ENCODE measurements at regions of chr6 and their contacts with region 1.

Region 1: GRCh38 chr6:166999145-166999883 is at the start of gene CEP43:
- DNase-seq: peak; percentile 64 to 93 (median 81)
- ATAC-seq: peak; percentile 94
- H3K4me3 ChIP-seq: peak within 1 kb of the TSS; percentile 83
- H3K4me3 Mint-ChIP-seq: peak within 1 kb of the TSS; percentile 85 to 95 (median 88)
- H3K27ac ChIP-seq: peak within 1 kb of the TSS; percentile 78
- H3K27ac Mint-ChIP-seq: peak within 1 kb of the TSS; percentile 61 to 95 (median 81)
- H3K4me1 ChIP-seq: peaks cover 16% of the 10 kb centered on the region in 2 donors
- H3K4me1 Mint-ChIP-seq: peaks cover 28 to 38% (median 30%) of the 10 kb centered on the region in 7 donors
- H3K27me3 ChIP-seq: no peaks in the 10 kb centered on the region
- H3K27me3 Mint-ChIP-seq: no peaks in the 10 kb centered on the region
- total RNA-seq, gene CEP43: 11.5 to 17.6 (median 15.5) TPM

Region 2: DNA sequence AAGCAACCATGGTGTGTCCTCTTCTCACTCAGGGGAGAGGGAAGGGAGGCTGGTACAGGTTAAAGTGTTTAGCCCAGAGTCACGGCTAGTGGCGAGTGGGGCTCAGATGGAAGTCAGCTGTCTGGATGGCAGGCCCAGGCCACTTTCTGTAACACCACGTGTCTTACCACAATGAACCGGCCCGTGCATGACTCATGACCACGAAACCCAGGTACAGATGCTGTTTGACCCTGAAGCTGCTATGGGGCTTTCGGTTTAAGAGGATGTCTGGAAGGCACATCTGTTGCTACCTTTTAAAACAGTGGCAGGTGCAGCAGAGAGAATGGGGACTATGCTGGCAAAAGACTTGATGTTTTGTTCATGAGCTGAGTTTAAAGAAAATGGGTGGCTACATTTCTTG is 580.0 kb before region 1 on chr6:
- CTCF ChIA-PET with region 1: no interaction called
- POLR2A ChIA-PET with region 1: no interaction called
- intact Hi-C with region 1: loop called (anchors 2 to 10 kb)
- DNase-seq: peak in 2 of 9 donors; percentile 34 to 52
- ATAC-seq: peak; percentile 42
- H3K4me3 ChIP-seq: no peak overlapping the region
- H3K4me3 Mint-ChIP-seq: peak overlapping the region; percentile 4 to 79 (median 57)
- H3K27ac ChIP-seq: peak overlapping the region; percentile 50
- H3K27ac Mint-ChIP-seq: peak overlapping the region; percentile 83 to 99 (median 97)
- H3K4me1 ChIP-seq: peaks cover 63 to 66% of the 10 kb centered on the region in 2 donors
- H3K4me1 Mint-ChIP-seq: peaks cover 52 to 73% (median 64%) of the 10 kb centered on the region in 7 donors
- H3K27me3 ChIP-seq: no peaks in the 10 kb centered on the region
- H3K27me3 Mint-ChIP-seq: peaks cover 0 to 1% (median 0%) of the 10 kb centered on the region in 5 donors

Region 3: DNA sequence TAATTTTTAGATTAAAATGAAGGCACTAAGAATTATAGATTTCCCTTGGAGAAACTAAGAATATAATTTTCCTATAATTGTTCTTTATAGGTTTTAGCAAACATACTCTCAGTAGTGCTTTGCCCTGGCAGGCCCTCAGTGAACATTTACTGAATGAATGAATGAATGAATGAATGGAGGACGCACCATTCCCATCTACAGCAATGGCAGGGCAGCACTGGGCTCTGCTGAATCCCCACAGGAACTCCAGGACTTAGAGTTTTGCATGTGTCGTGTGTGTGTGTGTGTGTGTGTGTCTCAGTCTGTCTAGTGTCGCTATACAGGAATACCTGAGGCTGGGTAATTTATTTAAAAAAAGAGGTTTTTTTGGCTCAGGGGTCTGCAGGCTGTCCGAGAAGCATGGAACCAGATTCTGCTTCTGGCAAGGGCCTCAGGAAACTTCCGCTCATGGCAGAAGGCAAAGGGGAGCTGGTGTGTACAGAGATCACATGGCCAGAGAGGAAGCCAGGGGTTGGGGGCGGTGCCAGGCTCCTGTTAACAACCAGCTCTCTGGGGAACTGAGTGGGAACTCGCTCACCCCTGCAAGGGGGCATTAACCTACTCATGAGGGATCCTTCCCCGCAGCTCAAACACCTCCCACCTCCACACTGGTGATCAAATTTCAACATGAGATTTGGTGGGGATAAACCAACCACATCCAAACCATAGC is 63.1 kb before region 1 on chr6:
- CTCF ChIA-PET with region 1: no interaction called
- POLR2A ChIA-PET with region 1: no interaction called
- intact Hi-C with region 1: no loop called
- DNase-seq: peak in 4 of 9 donors; percentile 22 to 56 (median 27)
- ATAC-seq: peak; percentile 44
- H3K4me3 ChIP-seq: no peak overlapping the region
- H3K4me3 Mint-ChIP-seq: peak overlapping the region in 9 of 10 donors; percentile 6 to 74 (median 54)
- H3K27ac ChIP-seq: peak overlapping the region; percentile 54
- H3K27ac Mint-ChIP-seq: peak overlapping the region; percentile 41 to 97 (median 85)
- H3K4me1 ChIP-seq: peaks cover 0 to 16% of the 10 kb centered on the region in 2 donors
- H3K4me1 Mint-ChIP-seq: peaks cover 21 to 60% (median 32%) of the 10 kb centered on the region in 7 donors
- H3K27me3 ChIP-seq: no peaks in the 10 kb centered on the region
- H3K27me3 Mint-ChIP-seq: no peaks in the 10 kb centered on the region

Region 4: GRCh38 chr6:166950443-166950821 is 48.9 kb before region 1 on chr6:
- CTCF ChIA-PET with region 1: interaction called, 3 read pairs
- POLR2A ChIA-PET with region 1: interaction called, 3 read pairs
- intact Hi-C with region 1: loop called in 1 of 2 experiments (anchors 1 kb)
- DNase-seq: peak in 1 of 9 donors; percentile 31
- ATAC-seq: peak; percentile 12
- H3K4me3 ChIP-seq: peak overlapping the region; percentile 45
- H3K4me3 Mint-ChIP-seq: peak overlapping the region; percentile 51 to 95 (median 84)
- H3K27ac ChIP-seq: peak overlapping the region; percentile 92
- H3K27ac Mint-ChIP-seq: peak overlapping the region; percentile 91 to 99 (median 98)
- H3K4me1 ChIP-seq: peaks cover 28 to 63% of the 10 kb centered on the region in 2 donors
- H3K4me1 Mint-ChIP-seq: peaks cover 42 to 67% (median 64%) of the 10 kb centered on the region in 7 donors
- H3K27me3 ChIP-seq: no peaks in the 10 kb centered on the region
- H3K27me3 Mint-ChIP-seq: no peaks in the 10 kb centered on the region

Region 5: DNA sequence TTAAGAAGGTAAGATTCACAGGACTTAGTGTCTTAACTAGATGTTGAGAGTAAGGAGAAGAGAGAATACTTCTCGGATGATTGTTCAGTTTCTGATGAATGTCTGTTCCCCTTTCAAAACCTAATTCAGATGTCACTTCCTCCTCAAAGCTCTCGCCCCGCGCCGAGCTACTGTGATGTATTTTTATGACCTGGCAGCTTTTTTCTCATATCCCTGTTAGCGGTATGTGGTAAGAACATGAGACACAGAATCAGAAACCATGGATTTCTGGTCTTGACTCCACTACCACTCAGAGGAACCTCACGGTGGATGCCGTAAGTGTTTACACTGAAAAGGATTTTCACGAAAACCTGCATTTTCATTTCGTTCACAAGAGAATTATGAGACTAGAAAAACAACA is 48.2 kb after region 1 on chr6:
- CTCF ChIA-PET with region 1: interaction called, 3 read pairs
- POLR2A ChIA-PET with region 1: interaction called, 3 read pairs
- intact Hi-C with region 1: loop called in 1 of 2 experiments (anchors 2 kb)
- DNase-seq: peak in 6 of 9 donors; percentile 15 to 41 (median 28)
- ATAC-seq: peak; percentile 87
- H3K4me3 ChIP-seq: peak overlapping the region; percentile 5
- H3K4me3 Mint-ChIP-seq: peak overlapping the region in 9 of 10 donors; percentile 18 to 76 (median 53)
- H3K27ac ChIP-seq: peak overlapping the region; percentile 6
- H3K27ac Mint-ChIP-seq: peak overlapping the region; percentile 0 to 72 (median 15)
- H3K4me1 ChIP-seq: peaks cover 5 to 24% of the 10 kb centered on the region in 2 donors
- H3K4me1 Mint-ChIP-seq: peaks cover 13 to 26% (median 22%) of the 10 kb centered on the region in 7 donors
- H3K27me3 ChIP-seq: no peaks in the 10 kb centered on the region
- H3K27me3 Mint-ChIP-seq: no peaks in the 10 kb centered on the region

Region 6: GRCh38 chr6:167119670-167120381 is 120.5 kb after region 1 on chr6:
- CTCF ChIA-PET with region 1: no interaction called
- POLR2A ChIA-PET with region 1: interaction called, 4 read pairs
- intact Hi-C with region 1: loop called in 1 of 2 experiments (anchors 5 kb)
- DNase-seq: peak in 7 of 9 donors; percentile 54 to 88 (median 78)
- ATAC-seq: peak; percentile 94
- H3K4me3 ChIP-seq: no peak overlapping the region
- H3K4me3 Mint-ChIP-seq: peak overlapping the region in 9 of 10 donors; percentile 35 to 69 (median 57)
- H3K27ac ChIP-seq: no peak overlapping the region
- H3K27ac Mint-ChIP-seq: peak overlapping the region in 8 of 9 donors; percentile 72 to 93 (median 84)
- H3K4me1 ChIP-seq: peaks cover 28 to 54% of the 10 kb centered on the region in 2 donors
- H3K4me1 Mint-ChIP-seq: peaks cover 11 to 54% (median 38%) of the 10 kb centered on the region in 7 donors
- H3K27me3 ChIP-seq: no peaks in the 10 kb centered on the region
- H3K27me3 Mint-ChIP-seq: peaks cover 0 to 5% (median 0%) of the 10 kb centered on the region in 5 donors

Region 7: GRCh38 chr6:167141667-167142432 is 142.5 kb after region 1 on chr6:
- CTCF ChIA-PET with region 1: interaction called, 3 read pairs
- POLR2A ChIA-PET with region 1: no interaction called
- intact Hi-C with region 1: loop called (anchors 1 to 5 kb)
- DNase-seq: peak; percentile 9 to 54 (median 41)
- ATAC-seq: peak; percentile 84
- H3K4me3 ChIP-seq: no peak overlapping the region
- H3K4me3 Mint-ChIP-seq: no peak overlapping the region
- H3K27ac ChIP-seq: no peak overlapping the region
- H3K27ac Mint-ChIP-seq: no peak overlapping the region
- H3K4me1 ChIP-seq: peaks cover 0 to 4% of the 10 kb centered on the region in 2 donors
- H3K4me1 Mint-ChIP-seq: peaks cover 0 to 6% (median 0%) of the 10 kb centered on the region in 7 donors
- H3K27me3 ChIP-seq: no peaks in the 10 kb centered on the region
- H3K27me3 Mint-ChIP-seq: peaks cover 0 to 21% (median 12%) of the 10 kb centered on the region in 5 donors

Region 8: DNA sequence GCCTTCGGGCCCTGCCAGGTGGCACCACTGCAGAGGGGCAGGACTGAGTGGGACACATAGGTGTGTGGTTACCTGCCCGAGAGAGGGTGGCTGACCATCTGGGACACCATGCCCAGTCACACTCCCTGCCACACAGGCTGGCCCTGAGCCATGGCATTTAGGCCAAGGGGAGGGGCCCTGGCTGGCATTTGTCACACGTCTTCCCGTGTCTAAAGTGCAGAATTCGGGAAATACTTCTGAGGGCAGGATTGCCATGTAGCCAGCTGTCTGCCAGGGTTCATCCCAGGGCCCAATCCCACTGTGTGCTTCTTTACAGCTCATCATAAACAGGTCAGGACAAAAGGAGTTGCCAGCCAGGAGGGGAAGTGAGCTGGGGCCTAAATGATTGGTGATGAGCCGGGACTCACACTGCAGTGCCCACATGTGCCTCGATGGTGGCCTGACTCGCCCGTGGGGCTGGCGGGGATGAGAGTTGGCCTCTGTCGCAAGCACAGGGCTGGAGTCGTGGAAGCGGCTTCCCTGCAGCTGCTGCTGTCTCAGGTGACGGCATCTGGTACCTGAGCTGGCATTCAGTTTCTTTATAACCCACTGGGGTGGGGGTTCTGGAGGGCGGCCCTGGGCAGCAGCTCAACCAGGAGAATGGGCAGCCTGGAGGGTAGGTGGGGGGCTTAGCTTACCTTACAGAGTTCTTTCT is 285.9 kb after region 1 on chr6:
- CTCF ChIA-PET with region 1: no interaction called
- POLR2A ChIA-PET with region 1: no interaction called
- intact Hi-C with region 1: loop called in 1 of 2 experiments (anchors 10 kb)
- DNase-seq: no peak
- ATAC-seq: no peak
- H3K4me3 ChIP-seq: no peak overlapping the region
- H3K4me3 Mint-ChIP-seq: no peak overlapping the region
- H3K27ac ChIP-seq: no peak overlapping the region
- H3K27ac Mint-ChIP-seq: no peak overlapping the region
- H3K4me1 ChIP-seq: no peaks in the 10 kb centered on the region
- H3K4me1 Mint-ChIP-seq: no peaks in the 10 kb centered on the region
- H3K27me3 ChIP-seq: no peaks in the 10 kb centered on the region
- H3K27me3 Mint-ChIP-seq: peaks cover 0 to 12% (median 0%) of the 10 kb centered on the region in 5 donors

Measured in naive thymus-derived CD4-positive, alpha-beta T cell (primary cell).